A673 (cell line): ENCODE measurements at regions of chr10 and their contacts with region 1.

Region 1: DNA sequence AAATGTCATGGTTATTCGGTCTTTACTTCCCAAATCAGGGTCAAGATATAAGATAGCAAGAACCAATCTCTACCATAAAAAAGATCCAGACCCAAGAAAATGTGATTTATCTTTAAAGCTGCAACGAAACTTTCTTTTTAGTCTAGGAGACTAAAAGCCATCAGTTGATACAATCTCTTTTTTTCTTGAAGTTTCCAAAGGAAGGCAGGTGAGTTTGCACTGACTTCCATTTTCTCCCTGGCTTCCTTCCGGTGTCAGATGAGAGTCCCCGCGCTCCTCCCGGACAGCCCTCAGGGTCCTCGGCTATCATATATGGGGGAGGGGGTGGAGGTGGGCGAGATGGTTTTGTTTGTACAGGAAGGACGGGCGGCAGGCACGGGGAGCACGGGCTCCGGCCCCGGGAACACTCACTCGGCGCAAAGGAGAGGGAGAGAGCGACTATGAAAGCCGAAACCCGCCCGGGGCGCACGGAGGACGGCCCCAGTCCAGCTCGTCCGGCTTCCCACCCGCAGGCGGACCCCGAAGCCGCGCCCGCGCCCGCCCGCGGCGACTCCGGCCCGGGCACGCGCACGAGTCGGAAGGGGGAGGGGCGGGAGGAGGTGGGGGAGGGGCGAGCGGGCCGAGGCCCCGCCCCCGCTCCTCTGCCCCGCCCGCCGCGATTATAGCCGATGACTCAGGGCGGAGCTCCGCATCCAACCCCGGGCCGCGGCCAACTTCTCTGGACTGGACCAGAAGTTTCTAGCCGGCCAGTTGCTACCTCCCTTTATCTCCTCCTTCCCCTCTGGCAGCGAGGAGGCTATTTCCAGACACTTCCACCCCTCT is at the start of gene BAG3:
- DNase-seq: peak; percentile 84
- H3K4me3 ChIP-seq: peak within 1 kb of the TSS; percentile 99
- H3K27ac ChIP-seq: peak within 1 kb of the TSS; percentile 92
- H3K4me1 ChIP-seq: peaks cover 31% of the 10 kb centered on the region
- H3K27me3 ChIP-seq: no peaks in the 10 kb centered on the region
- CTCF ChIP-seq: no peak
- total RNA-seq, gene BAG3: 56.5 and 57.6 TPM in 2 replicates

Region 2: DNA sequence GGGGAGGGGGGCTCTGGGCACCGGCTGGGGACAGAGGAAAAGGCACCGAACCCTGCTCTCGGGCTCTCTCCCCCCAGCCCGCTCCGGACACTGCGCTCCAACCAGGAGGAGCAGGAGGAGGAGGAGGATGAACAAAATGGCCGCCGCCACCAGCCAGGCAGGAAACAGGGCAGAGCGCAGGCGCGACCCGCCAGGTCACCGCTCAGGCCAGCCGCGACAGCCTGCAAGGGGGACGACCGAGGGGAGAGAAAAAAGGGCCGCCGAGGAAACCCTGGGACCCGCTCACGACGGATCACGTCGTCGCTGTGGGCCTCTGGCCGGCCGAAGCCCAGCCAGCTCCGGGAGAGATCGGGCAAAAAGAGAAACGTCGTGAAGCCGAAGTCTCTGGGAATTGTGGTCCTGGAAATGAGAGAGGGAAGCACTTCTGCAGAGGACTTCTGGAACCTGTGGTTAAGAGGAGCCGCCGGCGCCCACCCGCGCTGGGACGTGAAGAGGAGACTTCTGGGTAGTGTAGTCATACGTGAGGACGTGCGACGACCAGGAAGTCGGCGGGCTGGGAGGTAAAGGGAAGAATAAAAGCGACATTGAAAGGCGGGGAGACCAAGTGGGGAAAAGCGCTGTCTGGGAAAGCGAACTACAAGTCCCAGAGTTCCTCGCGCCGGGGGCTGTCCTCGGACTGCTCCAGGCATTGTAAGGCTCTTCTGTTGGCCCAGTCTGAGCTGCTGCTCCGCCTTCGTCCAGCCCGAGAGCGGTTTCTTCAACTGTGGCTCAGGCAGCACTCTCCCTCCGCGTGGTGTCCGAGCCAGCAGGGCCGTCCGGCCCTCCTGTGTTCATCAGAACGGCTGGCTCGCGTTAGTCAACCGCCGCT is 54.1 kb before region 1 on chr10 and contains the start of gene TIAL1:
- CTCF ChIA-PET with region 1: no interaction called
- POLR2A ChIA-PET with region 1: no interaction called
- intact Hi-C with region 1: loop called (anchors 5 kb)
- DNase-seq: peak; percentile 100
- H3K4me3 ChIP-seq: peak within 1 kb of the TSS; percentile 80
- H3K27ac ChIP-seq: peak within 1 kb of the TSS; percentile 98
- H3K4me1 ChIP-seq: peaks cover 40% of the 10 kb centered on the region
- H3K27me3 ChIP-seq: no peaks in the 10 kb centered on the region
- CTCF ChIP-seq: no peak
- total RNA-seq, gene TIAL1: 176 and 199 TPM in 2 replicates